OCI-LY7 (cell line): ENCODE measurements at regions of chr17 and their contacts with region 1.

Region 1: DNA sequence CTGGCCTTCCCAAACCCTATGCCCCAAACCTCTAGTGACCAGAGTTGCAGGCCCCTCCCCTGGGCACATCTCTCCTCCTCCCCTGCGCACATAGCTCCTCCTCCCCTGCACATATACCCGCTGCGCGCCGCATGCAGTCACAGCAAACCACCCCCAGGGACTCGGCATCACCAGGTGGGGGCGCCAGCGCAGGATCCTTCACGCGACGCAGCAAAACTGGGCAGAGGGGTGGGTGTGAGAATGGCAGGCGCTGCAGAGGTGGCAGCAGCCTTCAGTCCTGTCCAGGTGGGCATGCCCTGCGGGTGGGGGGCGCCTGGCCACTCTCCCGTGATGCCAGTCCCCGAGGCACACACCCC is 5.6 kb downstream of the CORO6 start:
- DNase-seq: peak; percentile 91
- H3K4me3 ChIP-seq: peak overlapping the region; percentile 58
- H3K27ac ChIP-seq: peak overlapping the region; percentile 32
- H3K4me1 ChIP-seq: peaks cover 46% of the 10 kb centered on the region
- CTCF ChIP-seq: peak; percentile 87

Region 2: DNA sequence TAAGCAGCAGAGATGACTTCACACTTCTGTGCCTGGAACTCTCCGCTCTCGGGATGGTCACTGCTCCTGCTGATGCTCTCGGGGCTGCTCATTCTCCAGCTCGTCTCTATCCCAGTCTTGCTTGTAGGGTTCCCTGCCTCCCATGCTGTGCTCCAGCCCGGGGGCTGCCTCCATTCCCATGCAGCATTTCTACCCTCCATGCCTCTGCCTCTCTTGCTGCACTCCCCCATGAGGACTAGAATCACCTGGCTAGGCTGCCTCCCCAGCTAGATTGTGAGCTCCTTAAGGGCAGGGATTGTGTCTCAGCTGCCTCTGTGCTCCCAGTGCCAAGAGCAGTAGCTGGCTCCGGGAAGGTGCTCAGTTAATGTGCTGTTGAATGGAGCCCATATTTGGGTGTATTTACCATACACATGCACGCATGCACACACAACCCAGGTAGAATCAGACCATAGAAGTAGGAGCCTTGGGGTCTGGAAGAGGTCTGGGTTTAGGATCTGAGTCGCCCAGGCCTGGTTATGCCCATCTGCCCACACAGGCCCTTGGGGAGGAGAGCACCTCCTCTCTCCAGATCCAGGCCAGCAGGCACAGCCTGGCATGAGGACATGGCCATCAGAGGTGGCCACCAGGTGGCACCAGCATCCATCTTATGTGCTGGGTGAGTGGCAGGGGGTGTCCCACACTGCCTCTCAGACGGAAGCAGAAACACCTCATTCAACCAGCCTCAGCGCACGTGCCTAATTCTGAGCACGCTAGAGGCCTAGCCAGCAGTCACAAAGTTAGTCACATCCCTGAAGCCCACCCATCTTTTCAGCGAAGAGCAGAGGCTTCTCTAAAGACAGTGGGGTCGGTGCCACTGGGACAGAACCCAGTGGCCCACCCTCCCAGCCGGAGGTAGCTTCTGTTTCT is 37.0 kb before region 1 on chr17:
- CTCF ChIA-PET with region 1: no interaction called
- POLR2A ChIA-PET with region 1: no interaction called
- intact Hi-C with region 1: loop called (anchors 5 kb)
- DNase-seq: peak; percentile 89
- H3K4me3 ChIP-seq: no peak overlapping the region
- H3K27ac ChIP-seq: no peak overlapping the region
- H3K4me1 ChIP-seq: peaks cover 28% of the 10 kb centered on the region
- CTCF ChIP-seq: peak; percentile 88

Region 3: DNA sequence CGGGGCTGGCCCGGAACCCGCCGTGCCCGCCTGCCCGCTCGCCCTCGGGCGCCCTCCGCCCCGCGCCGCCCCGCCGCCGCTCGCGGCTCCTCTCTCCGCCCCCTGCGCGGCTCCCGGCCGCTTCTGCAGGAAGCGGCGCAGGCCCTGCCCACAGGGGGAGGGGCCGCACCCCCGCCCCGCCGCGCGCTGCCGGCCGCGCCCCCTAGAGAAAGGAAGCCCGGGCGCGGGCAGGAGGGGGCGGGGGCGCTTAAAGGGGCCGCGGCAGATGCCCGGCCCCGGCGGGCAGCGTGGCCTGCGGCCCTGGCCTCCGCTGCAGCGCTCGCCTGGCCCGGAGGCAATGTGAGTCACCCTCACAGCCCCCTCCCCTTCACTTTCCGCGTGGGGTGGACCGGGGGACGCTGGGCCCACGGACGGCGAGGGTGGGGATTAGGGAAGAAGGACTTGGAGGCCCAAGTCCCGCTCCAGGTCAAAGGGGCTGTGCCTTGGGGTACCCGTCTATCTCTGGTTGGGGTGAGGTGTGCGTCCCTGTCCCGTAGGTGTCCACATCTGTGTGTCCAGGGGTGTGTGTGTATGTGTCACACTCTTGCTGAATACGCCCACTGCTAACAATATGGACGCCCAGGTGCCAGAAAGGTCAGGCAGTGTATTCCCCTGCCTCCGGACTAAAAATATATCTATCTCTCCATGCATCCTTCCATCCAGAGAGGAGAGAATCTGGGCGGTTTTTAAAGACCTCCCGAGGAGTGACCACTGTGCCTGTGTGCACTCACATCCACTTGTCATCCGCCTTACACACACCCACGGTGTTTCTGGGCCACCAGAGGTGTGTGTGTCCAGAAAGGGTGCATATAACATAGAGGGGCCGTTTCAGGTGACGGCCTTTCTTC is 27.3 kb before region 1 on chr17 and contains the start of gene GIT1:
- CTCF ChIA-PET with region 1: interaction called, 3 read pairs
- POLR2A ChIA-PET with region 1: interaction called, 5 read pairs
- intact Hi-C with region 1: loop called (anchors 1 kb)
- DNase-seq: peak; percentile 92
- H3K4me3 ChIP-seq: peak within 1 kb of the TSS; percentile 79
- H3K27ac ChIP-seq: peak within 1 kb of the TSS; percentile 61
- H3K4me1 ChIP-seq: peaks cover 68% of the 10 kb centered on the region
- CTCF ChIP-seq: 0 out of 2 replicates have a peak, but pooled peaks have one; percentile 4
- total RNA-seq, gene GIT1: 38.8 and 44.3 TPM in 2 replicates

Region 4: GRCh38 chr17:29777663-29778062 is 160.6 kb after region 1 on chr17:
- CTCF ChIA-PET with region 1: interaction called, 5 read pairs
- POLR2A ChIA-PET with region 1: interaction called, 4 read pairs
- intact Hi-C with region 1: loop called (anchors 1 kb)
- DNase-seq: no peak
- H3K4me3 ChIP-seq: no peak overlapping the region
- H3K27ac ChIP-seq: no peak overlapping the region
- H3K4me1 ChIP-seq: peaks cover 11% of the 10 kb centered on the region
- CTCF ChIP-seq: no peak

Region 5: GRCh38 chr17:30021708-30022317 is 404.7 kb after region 1 on chr17:
- CTCF ChIA-PET with region 1: no interaction called
- POLR2A ChIA-PET with region 1: no interaction called
- intact Hi-C with region 1: loop called (anchors 5 kb)
- DNase-seq: peak; percentile 67
- H3K4me3 ChIP-seq: no peak overlapping the region
- H3K27ac ChIP-seq: no peak overlapping the region
- H3K4me1 ChIP-seq: no peaks in the 10 kb centered on the region
- CTCF ChIP-seq: peak; percentile 99

Region 6: GRCh38 chr17:30093463-30094147 is 476.5 kb after region 1 on chr17:
- CTCF ChIA-PET with region 1: no interaction called
- POLR2A ChIA-PET with region 1: no interaction called
- intact Hi-C with region 1: loop called (anchors 5 kb)
- DNase-seq: peak; percentile 63
- H3K4me3 ChIP-seq: no peak overlapping the region
- H3K27ac ChIP-seq: no peak overlapping the region
- H3K4me1 ChIP-seq: peaks cover 6% of the 10 kb centered on the region
- CTCF ChIP-seq: peak; percentile 95